ENCODE measurements at regions of chr14 and their contacts with region 1.

Region 1: DNA sequence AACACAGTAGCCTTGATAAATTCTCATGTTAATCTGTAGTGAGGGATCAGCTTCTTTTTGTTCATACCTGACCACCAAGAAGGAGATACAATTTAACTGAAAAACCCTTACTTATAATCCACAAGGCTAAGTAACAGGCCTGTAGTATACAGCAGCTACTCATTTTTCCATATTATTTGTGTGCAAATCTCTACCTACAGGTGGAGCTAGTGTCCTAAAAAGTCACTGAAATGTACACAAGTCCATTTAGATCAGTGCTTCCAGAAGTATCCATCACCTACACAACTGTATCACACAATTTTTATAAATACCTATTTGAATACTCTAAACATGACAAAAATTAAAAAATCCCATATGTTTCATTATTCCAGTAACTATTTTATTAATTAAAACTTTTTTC is 173.2 kb downstream of the SLC35F4 start:
- DNase-seq: no peak
- H3K4me3 ChIP-seq: no peak overlapping the region
- H3K27ac ChIP-seq: no peak overlapping the region
- H3K4me1 ChIP-seq: no peaks in the 10 kb centered on the region
- H3K27me3 ChIP-seq: no peaks in the 10 kb centered on the region
- CTCF ChIP-seq: peak in 3 of 6 experiments; percentile 44 to 59 (median 57)
- POLR2A ChIP-seq: no peak

Region 2: DNA sequence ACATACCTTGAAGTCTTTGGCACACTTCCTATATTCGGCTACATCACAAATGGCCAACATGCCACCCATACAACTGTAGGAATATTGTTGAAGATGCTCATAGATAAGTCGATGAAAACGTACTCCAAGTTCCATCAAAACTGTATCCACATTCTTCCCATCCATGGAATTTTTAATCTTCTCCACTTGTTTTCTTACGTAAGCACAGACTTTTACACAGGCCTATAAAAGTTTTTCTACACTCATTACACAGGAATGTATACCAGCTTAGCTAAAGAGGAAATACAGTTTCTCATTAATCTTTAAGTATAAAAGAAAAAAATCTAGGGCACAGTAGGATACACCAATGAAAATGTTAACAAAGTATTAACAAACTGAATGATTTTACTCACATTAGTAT is 483.1 kb before region 1 on chr14:
- intact Hi-C with region 1: no loop called
- DNase-seq: no peak
- H3K4me3 ChIP-seq: no peak overlapping the region
- H3K27ac ChIP-seq: no peak overlapping the region
- H3K4me1 ChIP-seq: no peaks in the 10 kb centered on the region
- H3K27me3 ChIP-seq: no peaks in the 10 kb centered on the region
- CTCF ChIP-seq: no peak
- POLR2A ChIP-seq: no peak

Region 3: GRCh38 chr14:58072288-58073071 is 379.8 kb after region 1 on chr14:
- intact Hi-C with region 1: loop called (anchors 10 kb)
- DNase-seq: peak; percentile 47 to 54
- H3K4me3 ChIP-seq: no peak overlapping the region
- H3K27ac ChIP-seq: no peak overlapping the region
- H3K4me1 ChIP-seq: no peaks in the 10 kb centered on the region
- H3K27me3 ChIP-seq: no peaks in the 10 kb centered on the region
- CTCF ChIP-seq: peak; percentile 50 to 83 (median 69)
- POLR2A ChIP-seq: no peak